ENCODE measurements at regions of chr7 and their contacts with region 1.

Region 1: DNA sequence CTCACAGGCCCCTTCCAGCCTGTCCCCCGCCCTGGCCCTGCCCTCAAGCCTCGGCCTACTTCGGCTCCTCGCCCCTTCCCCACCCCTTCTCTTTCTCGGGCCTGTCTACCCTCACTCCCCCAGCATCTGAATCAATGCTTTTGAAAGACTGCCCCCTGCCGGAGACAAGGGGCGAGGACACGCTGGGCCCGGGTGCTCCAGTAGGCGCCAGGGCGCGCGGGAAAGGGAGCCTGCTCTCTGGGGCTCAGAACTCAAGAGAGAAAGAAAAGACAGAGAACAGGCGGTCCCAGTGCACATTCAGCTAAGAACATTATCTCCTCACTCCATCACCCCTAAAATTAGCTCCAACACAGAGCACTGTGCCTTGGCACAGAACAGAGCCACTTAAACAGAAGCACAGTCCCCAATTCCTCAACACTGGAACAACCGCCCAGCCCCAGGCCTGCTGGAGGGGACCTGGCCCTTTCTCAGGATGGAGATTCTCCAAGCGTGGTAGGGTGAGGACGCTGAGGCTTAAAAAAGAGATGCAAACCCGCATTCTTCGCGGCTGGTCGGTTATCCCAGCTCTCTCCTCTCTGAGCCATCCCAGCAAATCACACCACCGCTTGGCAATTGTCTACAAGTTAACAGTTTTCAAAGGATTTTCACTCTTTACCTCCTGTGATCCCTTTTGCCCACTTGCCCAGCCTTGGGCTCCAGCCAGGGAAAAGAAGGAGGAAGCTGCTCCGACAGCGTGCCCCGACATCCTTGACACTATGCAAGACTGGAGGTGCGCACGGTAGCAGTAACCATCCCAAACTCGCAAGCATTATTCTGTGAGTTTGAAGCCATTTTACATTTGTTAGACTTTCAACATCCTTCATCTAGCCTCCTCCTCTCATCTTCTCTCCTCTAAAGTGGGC is 2.1 kb downstream of the GIGYF1 start:
- DNase-seq: peak; percentile 89
- ATAC-seq: peak; percentile 85

Region 2: GRCh38 chr7:100563809-100564400 is 128.0 kb before region 1 on chr7:
- intact Hi-C with region 1: loop called (anchors 5 kb)
- DNase-seq: peak; percentile 90
- ATAC-seq: peak; percentile 69

Region 3: GRCh38 chr7:100604028-100604975 is 87.6 kb before region 1 on chr7:
- intact Hi-C with region 1: loop called (anchors 5 kb)
- DNase-seq: peak; percentile 90
- ATAC-seq: peak; percentile 85

Region 4: DNA sequence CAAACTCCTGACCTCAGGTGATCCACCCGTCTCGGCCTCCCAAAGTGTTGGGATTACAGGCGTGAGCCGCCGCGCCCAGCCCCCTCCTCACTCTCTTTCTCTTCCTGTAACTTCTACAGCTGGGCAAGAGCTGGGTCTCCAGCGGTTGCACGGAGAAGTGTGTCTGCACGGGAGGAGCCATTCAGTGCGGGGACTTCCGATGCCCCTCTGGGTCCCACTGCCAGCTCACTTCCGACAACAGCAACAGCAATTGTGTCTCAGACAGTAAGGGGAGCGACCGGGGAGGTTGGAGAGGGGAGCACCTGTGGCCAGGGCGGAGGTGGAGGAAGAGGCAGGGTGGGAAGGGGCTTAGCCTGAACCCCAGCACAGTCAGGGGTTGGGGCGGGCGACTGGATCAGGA is 94.0 kb after region 1 on chr7:
- intact Hi-C with region 1: no loop called
- DNase-seq: no peak
- ATAC-seq: no peak